PC-9 (cell line): ENCODE measurements at regions of chr10 and their contacts with region 1.

Region 1: DNA sequence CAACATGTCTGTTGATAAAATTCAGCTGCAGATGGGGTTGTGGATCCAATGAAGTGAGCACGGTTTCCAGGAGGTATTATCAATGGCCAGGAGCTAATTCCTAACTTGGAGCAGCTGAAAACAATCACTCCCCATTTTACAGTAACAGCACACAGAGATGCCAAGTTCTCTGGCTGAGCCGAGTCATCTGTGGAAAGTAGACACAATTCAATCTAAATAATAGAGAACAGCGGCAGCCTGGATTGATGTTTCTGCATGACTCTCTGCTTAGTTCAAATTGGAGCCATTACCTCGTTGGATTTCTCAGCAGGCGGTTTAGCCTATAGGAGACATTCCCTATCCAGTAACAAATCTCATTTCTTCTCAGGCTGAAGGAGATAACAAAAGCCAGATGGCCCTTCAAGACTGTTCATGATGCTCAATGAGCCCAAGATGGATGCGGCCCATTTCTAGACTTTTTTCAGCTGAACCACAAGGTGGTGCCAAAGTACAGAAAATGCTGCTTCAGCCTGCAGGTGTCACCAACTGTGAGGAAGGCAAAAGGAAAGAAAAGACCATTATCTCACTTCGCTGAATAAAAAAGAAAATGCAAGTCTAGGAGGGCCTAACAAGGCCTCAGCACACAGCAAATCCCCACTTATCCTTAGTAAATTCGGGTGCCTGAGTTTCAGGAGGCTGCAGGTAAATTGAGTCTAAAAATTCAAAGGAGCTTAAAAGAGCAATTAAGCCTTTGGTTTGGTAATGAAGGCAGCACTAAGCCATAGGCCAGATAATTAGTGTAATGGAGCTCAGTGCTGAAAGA is 83.7 kb downstream of the SLC16A9 start:
- DNase-seq: peak; percentile 49 to 68
- H3K4me3 ChIP-seq: no peak overlapping the region
- H3K27ac ChIP-seq: no peak overlapping the region
- H3K4me1 ChIP-seq: no peaks in the 10 kb centered on the region
- H3K27me3 ChIP-seq: 0 out of 2 replicates have a peak, but pooled peaks cover 5% of the 10 kb centered on the region
- CTCF ChIP-seq: peak; percentile 95

Region 2: DNA sequence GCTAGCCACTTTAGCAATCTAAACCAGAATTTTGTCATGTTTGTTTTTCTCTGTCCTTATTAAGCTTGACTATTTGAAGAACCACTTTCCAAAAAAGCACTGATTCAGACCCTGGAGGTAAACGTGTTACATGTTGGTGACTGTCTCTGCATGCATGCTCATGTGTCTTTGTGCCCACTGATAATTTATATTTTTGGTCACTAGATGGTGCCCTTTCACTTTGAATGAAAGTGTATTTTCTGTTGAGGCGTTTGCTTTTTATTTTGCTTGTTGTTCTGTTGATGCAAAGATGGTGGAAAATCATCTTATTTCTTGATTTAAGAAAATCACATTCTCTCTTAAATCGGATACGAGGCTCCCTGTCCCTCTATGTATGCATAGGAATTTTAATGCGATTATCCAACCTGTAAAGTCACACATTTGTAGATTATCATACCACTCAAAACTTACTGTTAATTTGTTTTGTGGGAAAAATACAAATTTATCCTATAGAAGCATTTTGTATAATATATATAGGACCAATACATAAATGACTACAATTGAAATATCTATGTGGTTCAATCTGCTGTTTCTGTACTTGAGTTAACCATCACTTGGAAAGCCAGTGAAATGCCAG is 843.9 kb before region 1 on chr10:
- CTCF ChIA-PET with region 1: interaction called, 3 read pairs
- POLR2A ChIA-PET with region 1: no interaction called
- intact Hi-C with region 1: loop called (anchors 1 kb)
- DNase-seq: peak in 1 of 2 experiments; percentile 4
- H3K4me3 ChIP-seq: no peak overlapping the region
- H3K27ac ChIP-seq: no peak overlapping the region
- H3K4me1 ChIP-seq: no peaks in the 10 kb centered on the region
- H3K27me3 ChIP-seq: no peaks in the 10 kb centered on the region
- CTCF ChIP-seq: peak; percentile 84

Region 3: DNA sequence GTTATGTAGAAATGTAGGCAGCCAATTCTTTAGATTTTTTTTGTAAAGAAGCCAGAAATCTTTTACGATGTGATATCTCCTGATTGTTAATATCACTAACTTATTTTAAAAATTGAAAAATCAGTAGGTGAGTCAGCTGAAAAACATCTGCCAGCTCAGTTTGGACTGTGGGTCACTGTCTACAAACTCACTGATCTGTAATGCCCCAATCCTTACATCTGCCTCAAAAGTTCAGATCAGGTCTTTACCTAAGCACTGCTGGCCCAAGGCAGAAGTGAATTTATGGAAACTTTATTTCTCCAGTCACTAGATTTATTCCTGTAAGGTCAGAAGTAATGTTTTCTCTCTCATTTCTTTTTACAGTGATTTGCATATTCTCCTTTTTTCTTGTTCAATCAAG is 232.6 kb before region 1 on chr10:
- CTCF ChIA-PET with region 1: no interaction called
- POLR2A ChIA-PET with region 1: no interaction called
- intact Hi-C with region 1: no loop called
- DNase-seq: no peak
- H3K4me3 ChIP-seq: no peak overlapping the region
- H3K27ac ChIP-seq: no peak overlapping the region
- H3K4me1 ChIP-seq: no peaks in the 10 kb centered on the region
- H3K27me3 ChIP-seq: no peaks in the 10 kb centered on the region
- CTCF ChIP-seq: no peak

Region 4: GRCh38 chr10:59606551-59606961 is 19.4 kb before region 1 on chr10:
- CTCF ChIA-PET with region 1: no interaction called
- POLR2A ChIA-PET with region 1: no interaction called
- intact Hi-C with region 1: no loop called
- DNase-seq: no peak
- H3K4me3 ChIP-seq: no peak overlapping the region
- H3K27ac ChIP-seq: no peak overlapping the region
- H3K4me1 ChIP-seq: no peaks in the 10 kb centered on the region
- H3K27me3 ChIP-seq: no peaks in the 10 kb centered on the region
- CTCF ChIP-seq: no peak

Region 5: GRCh38 chr10:59808896-59809643 is 183.1 kb after region 1 on chr10:
- CTCF ChIA-PET with region 1: no interaction called
- POLR2A ChIA-PET with region 1: no interaction called
- intact Hi-C with region 1: loop called (anchors 1 kb)
- DNase-seq: peak; percentile 63 to 66
- H3K4me3 ChIP-seq: no peak overlapping the region
- H3K27ac ChIP-seq: no peak overlapping the region
- H3K4me1 ChIP-seq: no peaks in the 10 kb centered on the region
- H3K27me3 ChIP-seq: no peaks in the 10 kb centered on the region
- CTCF ChIP-seq: peak; percentile 85

Region 6: DNA sequence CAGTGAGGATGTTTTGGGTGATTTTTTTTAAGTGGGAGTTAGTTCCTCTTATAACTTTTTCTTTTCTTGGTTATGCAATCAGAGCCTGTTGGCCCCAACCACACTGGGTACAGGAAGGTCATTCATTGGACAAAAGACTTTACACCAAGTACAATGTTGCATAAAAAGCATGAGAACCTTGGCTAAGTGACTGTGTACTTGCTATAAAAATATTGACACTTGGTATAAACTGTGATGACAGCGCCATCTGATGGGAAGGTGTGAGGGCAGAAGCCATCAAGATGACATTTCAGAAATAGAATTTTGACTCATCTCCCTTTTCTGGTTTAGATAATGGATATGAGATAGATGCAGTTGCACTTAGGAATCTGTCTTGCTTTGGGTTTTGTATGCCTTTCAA is 406.8 kb after region 1 on chr10:
- CTCF ChIA-PET with region 1: interaction called, 13 read pairs
- POLR2A ChIA-PET with region 1: no interaction called
- intact Hi-C with region 1: loop called (anchors 1 kb)
- DNase-seq: peak; percentile 41 to 64
- H3K4me3 ChIP-seq: no peak overlapping the region
- H3K27ac ChIP-seq: no peak overlapping the region
- H3K4me1 ChIP-seq: peaks cover 17% of the 10 kb centered on the region
- H3K27me3 ChIP-seq: no peaks in the 10 kb centered on the region
- CTCF ChIP-seq: peak; percentile 76

Region 7: DNA sequence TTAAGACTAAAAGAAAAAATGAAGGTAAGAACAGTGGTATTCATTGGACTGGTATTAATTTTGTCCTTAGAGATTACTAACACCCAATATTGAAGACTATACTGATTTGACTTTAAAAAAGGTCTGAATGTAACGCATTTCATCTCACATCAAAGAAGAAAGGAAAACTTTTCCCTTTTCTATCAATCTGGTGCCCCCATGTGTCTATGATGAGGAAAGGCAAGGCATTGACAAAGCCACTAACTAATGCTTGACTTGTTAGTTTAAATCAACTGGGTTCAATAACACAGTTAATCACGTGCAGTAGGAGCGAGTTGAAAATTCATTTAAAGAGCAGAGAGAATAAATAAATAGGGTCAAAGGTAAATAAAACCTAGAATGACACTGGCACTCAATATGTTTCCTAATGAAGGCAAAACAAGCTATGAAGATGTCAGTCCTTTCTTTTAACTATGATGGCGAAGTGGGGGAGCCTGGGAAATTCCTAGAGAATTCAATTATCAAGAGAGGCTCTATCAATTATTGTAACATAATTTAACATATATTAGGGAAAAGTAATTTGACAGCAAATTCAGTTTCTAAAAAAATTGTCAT is 582.9 kb after region 1 on chr10:
- CTCF ChIA-PET with region 1: no interaction called
- POLR2A ChIA-PET with region 1: no interaction called
- intact Hi-C with region 1: loop called (anchors 1 kb)
- DNase-seq: peak in 1 of 2 experiments; percentile 60
- H3K4me3 ChIP-seq: no peak overlapping the region
- H3K27ac ChIP-seq: no peak overlapping the region
- H3K4me1 ChIP-seq: peaks cover 8% of the 10 kb centered on the region
- H3K27me3 ChIP-seq: no peaks in the 10 kb centered on the region
- CTCF ChIP-seq: peak; percentile 89